ENCODE measurements at regions of chr3 and their contacts with region 1.

Region 1: GRCh38 chr3:169966428-169966950 is at the start of gene SEC62:
- DNase-seq: peak; percentile 88
- H3K4me3 Mint-ChIP-seq: peak within 1 kb of the TSS; percentile 91
- H3K27ac Mint-ChIP-seq: peak within 1 kb of the TSS; percentile 99
- H3K4me1 Mint-ChIP-seq: peaks cover 41% of the 10 kb centered on the region
- H3K27me3 Mint-ChIP-seq: peaks cover 5% of the 10 kb centered on the region
- total RNA-seq, gene SEC62: 74.2 and 78.4 TPM in 2 replicates

Region 2: GRCh38 chr3:169863458-169863899 is 103.0 kb before region 1 on chr3:
- intact Hi-C with region 1: loop called (anchors 2 kb)
- DNase-seq: peak; percentile 60
- H3K4me3 Mint-ChIP-seq: no peak overlapping the region
- H3K27ac Mint-ChIP-seq: no peak overlapping the region
- H3K4me1 Mint-ChIP-seq: peaks cover 11% of the 10 kb centered on the region
- H3K27me3 Mint-ChIP-seq: peaks cover 25% of the 10 kb centered on the region

Region 3: DNA sequence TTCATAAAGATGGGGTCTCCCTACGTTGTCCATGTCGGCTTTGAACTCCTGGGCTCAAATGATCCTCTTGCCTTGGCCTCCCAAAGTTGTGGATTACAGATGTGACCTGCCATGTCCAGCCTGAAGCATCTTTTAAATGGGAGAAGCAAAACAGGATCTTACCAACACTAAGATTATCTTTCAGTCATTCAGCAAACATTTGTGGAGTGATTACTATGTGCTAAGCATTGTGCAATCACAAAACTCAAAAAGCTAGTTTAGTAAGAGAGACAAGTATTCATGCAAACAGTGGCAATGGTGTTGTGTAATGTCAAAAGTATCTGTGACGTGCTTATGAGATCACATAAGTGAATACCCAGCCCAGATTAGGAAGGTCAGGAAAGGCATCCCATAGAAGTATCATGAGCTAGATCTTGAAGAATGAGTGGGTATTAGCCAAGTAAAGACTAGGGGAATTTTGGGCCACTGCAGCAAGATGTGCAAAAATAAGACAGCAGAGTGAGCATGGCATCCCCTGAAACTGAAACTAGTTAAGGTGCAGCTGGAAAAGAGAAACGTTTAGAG is 32.2 kb after region 1 on chr3:
- intact Hi-C with region 1: loop called (anchors 5 kb)
- DNase-seq: no peak
- H3K4me3 Mint-ChIP-seq: no peak overlapping the region
- H3K27ac Mint-ChIP-seq: peak overlapping the region; percentile 74
- H3K4me1 Mint-ChIP-seq: peaks cover 27% of the 10 kb centered on the region
- H3K27me3 Mint-ChIP-seq: no peaks in the 10 kb centered on the region

Region 4: DNA sequence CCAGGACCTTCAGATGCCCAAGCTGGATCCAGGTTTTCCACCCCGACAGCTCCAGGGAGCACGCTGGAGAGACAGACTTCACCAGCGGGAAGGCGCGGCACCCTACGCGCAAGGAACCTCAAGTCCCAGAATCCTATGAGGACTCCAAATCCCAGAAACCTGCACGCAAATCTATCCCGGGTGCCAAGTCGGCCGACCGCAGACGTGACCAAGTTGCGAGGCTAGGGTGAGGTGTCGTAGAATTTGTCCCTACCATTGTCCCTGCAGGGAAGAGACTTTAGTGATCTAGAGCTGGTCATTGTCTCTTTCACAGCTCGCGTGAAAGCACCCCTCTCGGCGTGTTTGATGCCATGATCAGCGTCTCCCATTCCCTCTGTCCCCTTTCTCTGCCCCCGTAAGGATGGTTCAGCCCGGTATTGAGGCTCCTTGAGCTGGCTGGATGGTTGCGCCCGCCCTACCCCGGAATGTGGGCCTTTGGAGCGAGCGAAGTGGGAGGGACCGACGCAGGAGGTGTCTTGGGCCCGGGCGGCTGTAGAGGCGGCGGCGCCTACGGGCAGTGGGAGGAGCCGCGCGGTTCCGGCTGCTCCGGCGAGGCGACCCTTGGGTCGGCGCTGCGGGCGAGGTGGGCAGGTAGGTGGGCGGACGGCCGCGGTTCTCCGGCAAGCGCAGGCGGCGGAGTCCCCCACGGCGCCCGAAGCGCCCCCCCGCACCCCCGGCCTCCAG is 255.6 kb after region 1 on chr3 and contains the start of gene PRKCI:
- intact Hi-C with region 1: loop called (anchors 5 kb)
- DNase-seq: peak; percentile 84
- H3K4me3 Mint-ChIP-seq: peak within 1 kb of the TSS; percentile 87
- H3K27ac Mint-ChIP-seq: peak within 1 kb of the TSS; percentile 89
- H3K4me1 Mint-ChIP-seq: peaks cover 22% of the 10 kb centered on the region
- H3K27me3 Mint-ChIP-seq: peaks cover 4% of the 10 kb centered on the region
- total RNA-seq, gene PRKCI: 24.7 and 32.4 TPM in 2 replicates

Region 5: GRCh38 chr3:170368921-170369320 is 402.4 kb after region 1 on chr3:
- intact Hi-C with region 1: no loop called
- DNase-seq: no peak
- H3K4me3 Mint-ChIP-seq: no peak overlapping the region
- H3K27ac Mint-ChIP-seq: no peak overlapping the region
- H3K4me1 Mint-ChIP-seq: peaks cover 12% of the 10 kb centered on the region
- H3K27me3 Mint-ChIP-seq: no peaks in the 10 kb centered on the region